HepG2 (cell line): ENCODE measurements at regions of chr7 and their contacts with region 1.

Region 1: GRCh38 chr7:158407581-158408317 is 179.9 kb downstream of the PTPRN2 start:
- DNase-seq: peak; percentile 55
- ATAC-seq: peak; percentile 34; the same call in 2 of the 3 replicates
- H3K4me3 ChIP-seq: no peak overlapping the region
- H3K27ac ChIP-seq: no peak overlapping the region
- H3K4me1 ChIP-seq: no peaks in the 10 kb centered on the region
- H3K27me3 ChIP-seq: no peaks in the 10 kb centered on the region
- CTCF ChIP-seq: peak; percentile 72
- EP300 ChIP-seq: no peak
- POLR2A ChIP-seq: no peak
- RAD21 ChIP-seq: no peak

Region 2: DNA sequence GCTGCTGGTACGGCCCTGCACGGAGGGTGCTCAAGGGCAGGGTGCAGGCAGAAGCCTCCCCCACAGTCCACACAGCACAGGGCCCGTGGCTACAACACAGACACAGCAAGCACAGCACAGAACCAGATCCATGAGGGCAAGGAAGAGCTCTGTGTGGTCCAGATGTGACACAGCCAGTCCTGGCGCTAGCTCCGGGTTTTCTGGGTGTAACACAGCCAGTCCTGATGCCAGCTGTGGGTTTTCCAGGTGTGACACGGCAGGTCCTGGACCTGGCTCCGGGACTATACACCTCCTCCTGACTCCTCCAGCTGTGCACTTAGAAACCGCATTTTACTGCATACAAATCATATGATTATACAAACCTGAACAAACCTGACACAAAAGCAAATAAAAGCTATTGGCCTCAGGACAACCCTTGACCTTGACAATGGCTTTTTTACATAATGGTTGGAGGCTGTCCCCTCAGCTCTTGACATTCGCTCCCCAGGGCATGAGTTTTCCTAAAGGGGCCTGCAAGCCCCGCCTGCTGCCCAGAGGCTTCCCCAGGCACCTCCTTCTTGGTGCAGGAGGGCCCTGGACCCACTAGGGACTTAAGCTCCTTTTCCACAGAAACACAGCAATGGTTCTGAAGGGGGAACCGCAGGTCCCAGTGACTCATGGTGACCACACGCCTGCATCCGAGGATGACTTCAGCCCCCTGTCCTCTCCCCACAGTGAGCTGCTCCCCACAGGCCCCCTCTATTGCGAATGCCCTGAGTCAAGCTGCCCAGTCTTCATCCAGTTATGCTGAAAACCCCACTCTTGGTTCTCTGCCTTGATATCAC is 29.7 kb before region 1 on chr7:
- CTCF ChIA-PET with region 1: no interaction called
- POLR2A ChIA-PET with region 1: no interaction called
- in situ Hi-C with region 1: no loop called
- intact Hi-C with region 1: no loop called
- DNase-seq: peak; percentile 18
- ATAC-seq: peak; percentile 63
- H3K4me3 ChIP-seq: no peak overlapping the region
- H3K27ac ChIP-seq: no peak overlapping the region
- H3K4me1 ChIP-seq: peaks cover 14% of the 10 kb centered on the region
- H3K27me3 ChIP-seq: peaks cover 0 to 1% of the 10 kb centered on the region in 2 experiments; a peak in 1 of 5 replicates
- CTCF ChIP-seq: no peak
- EP300 ChIP-seq: no peak
- POLR2A ChIP-seq: no peak
- RAD21 ChIP-seq: no peak

Region 3: GRCh38 chr7:158394936-158395335 is 12.8 kb before region 1 on chr7:
- CTCF ChIA-PET with region 1: no interaction called
- POLR2A ChIA-PET with region 1: no interaction called
- in situ Hi-C with region 1: no loop called
- intact Hi-C with region 1: loop called (anchors 1 kb)
- DNase-seq: no peak
- ATAC-seq: peak; percentile 46
- H3K4me3 ChIP-seq: no peak overlapping the region
- H3K27ac ChIP-seq: no peak overlapping the region
- H3K4me1 ChIP-seq: peaks cover 31% of the 10 kb centered on the region
- H3K27me3 ChIP-seq: no peaks in the 10 kb centered on the region
- CTCF ChIP-seq: peak; percentile 85
- EP300 ChIP-seq: no peak
- POLR2A ChIP-seq: no peak
- RAD21 ChIP-seq: no peak